Mammary epithelial cell (primary cell): ENCODE measurements at regions of chr6 and their contacts with region 1.

Region 1: DNA sequence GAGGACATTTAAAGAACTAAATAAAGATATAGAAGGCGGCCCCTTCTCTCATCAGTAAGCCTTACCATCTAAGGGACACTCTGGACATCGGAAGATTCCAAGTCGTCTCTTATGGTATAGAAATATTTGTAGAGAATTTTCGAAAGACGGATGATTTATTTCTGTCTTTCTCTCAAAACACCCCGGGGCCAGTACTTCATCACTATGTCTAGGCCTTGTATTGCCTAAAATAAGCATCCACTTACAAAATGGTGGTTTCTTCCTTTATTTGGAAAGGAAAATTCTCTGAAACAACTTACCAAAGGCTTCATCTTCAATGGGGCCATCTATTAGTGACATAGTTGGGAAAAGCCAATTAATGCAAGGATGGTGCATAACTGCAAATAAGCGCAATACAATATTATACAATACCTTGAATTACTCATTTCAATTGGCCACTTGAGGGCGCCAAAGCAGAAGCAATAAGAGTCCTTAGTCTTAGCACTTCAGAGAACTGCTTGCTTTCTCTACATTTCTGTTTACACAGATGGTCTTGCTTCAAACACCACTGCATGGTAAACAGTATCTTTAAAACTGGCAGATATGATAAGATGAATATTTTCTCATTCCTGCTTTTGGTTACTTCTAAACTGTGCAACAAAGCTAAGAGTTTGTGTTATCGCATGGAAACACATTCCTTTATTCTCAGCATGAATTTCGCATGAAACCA is 113.2 kb downstream of the VIP start:
- DNase-seq: peak; percentile 51
- H3K4me3 ChIP-seq: no peak overlapping the region
- H3K27ac ChIP-seq: no peak overlapping the region
- H3K4me1 ChIP-seq: no peaks in the 10 kb centered on the region
- H3K27me3 ChIP-seq: peaks cover 3% of the 10 kb centered on the region
- CTCF ChIP-seq: peak; percentile 60 to 63

Region 2: DNA sequence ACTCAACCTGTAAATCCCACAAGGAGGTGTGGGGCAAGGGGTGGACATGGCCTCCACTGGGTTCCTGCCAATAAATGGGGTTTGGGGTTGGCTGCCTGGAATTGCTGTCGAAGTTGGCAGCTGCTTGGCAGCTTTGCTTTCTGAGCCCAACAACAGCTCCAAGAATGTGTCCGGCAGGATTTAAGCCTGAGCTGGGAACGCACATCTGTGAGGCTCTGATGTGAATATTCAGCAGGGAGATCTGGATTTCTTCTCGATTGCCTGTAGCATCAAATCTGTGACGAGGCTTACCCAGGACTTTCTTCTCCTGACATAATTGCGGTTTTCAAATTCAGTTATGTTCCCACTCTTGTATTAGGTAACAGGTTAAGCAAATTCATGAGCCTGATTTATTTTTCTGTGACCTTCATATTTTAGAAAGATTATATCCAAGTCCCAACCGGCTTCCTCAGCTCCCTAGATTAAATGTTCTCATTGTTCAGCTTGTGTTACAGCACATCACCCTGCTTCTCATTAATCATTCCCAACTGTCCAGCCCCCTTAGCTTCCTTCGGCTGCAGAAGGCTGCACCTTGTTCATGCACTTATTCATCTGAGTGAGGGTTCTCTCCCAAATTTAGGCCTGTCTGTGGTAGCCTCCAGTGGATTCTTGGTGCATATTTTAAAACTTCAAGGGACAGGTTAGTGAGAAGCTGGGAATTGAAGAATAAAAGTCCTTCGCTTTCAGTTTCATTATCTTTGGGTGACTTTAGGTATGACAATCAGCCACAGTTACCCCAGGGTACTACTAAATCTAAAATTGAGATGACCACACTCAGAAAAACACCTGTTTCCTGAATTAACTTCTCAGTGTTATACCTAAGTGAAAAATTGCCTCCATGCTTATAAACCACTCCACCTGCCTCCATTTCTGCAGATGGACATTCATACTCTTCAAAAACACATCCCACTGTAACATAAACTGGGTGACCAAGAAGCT is 746.3 kb before region 1 on chr6:
- CTCF ChIA-PET with region 1: no interaction called
- dilution Hi-C with region 1: no loop called
- in situ Hi-C with region 1: no loop called
- intact Hi-C with region 1: no loop called
- DNase-seq: peak; percentile 47
- H3K4me3 ChIP-seq: no peak overlapping the region
- H3K27ac ChIP-seq: no peak overlapping the region
- H3K4me1 ChIP-seq: peaks cover 16% of the 10 kb centered on the region
- H3K27me3 ChIP-seq: no peaks in the 10 kb centered on the region
- CTCF ChIP-seq: no peak

Region 3: DNA sequence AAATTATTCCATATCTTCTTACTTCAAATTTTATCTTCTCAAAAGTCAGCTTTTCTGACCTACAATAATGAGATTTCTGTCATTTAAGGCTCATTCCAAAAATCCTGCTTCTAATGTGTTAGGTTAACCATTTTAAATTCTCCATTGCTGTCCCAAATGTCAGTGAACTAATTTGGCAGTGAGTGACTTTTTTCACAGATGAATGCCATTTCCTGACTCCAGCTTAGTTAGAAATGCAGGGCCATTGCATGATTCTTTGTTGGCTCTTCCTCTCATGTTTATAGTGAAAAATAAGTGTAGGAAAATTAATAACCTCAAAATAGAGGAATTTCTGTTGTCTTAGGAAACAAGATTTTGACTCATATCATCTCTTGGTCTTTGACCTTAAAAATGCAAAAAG is 69.1 kb before region 1 on chr6:
- CTCF ChIA-PET with region 1: no interaction called
- dilution Hi-C with region 1: loop called (anchors 5 kb)
- in situ Hi-C with region 1: no loop called
- intact Hi-C with region 1: no loop called
- DNase-seq: no peak
- H3K4me3 ChIP-seq: no peak overlapping the region
- H3K27ac ChIP-seq: no peak overlapping the region
- H3K4me1 ChIP-seq: no peaks in the 10 kb centered on the region
- H3K27me3 ChIP-seq: peaks cover 4% of the 10 kb centered on the region
- CTCF ChIP-seq: no peak

Region 4: GRCh38 chr6:153023977-153024708 is 160.4 kb after region 1 on chr6:
- CTCF ChIA-PET with region 1: no interaction called
- dilution Hi-C with region 1: no loop called
- in situ Hi-C with region 1: no loop called
- intact Hi-C with region 1: loop called (anchors 1 kb)
- DNase-seq: peak; percentile 54
- H3K4me3 ChIP-seq: no peak overlapping the region
- H3K27ac ChIP-seq: no peak overlapping the region
- H3K4me1 ChIP-seq: no peaks in the 10 kb centered on the region
- H3K27me3 ChIP-seq: no peaks in the 10 kb centered on the region
- CTCF ChIP-seq: peak; percentile 78 to 79